ENCODE measurements at regions of chr3 and their contacts with region 1.

Region 1: DNA sequence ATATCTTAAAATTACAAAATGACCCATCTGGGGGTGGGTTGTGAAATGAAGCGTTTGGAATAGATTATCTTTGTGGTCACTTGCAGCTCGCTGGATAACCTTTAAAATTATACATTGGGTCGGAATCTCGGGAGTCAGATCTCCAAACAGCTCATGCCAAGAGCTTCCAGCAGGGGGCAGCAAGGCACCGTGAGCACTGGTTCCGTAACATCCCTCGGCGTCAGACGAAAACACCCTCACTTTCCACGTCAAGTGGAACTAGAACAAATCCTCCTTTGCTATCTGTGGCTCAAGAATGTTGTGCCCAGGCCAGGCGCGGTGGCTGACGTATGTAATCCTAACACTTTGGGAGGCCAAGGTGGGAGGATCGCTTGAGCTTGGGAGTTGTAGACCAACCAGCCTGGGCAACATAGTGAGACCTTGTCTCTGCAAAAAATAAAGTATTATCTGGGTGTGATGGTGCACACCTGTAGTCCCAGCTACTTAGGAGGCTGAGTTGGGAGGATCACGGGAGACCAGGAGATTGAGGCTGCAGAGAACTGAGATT is 31.1 kb downstream of the UMPS start:
- DNase-seq: peak; percentile 61 to 87 (median 81)
- ATAC-seq: peak; percentile 91
- H3K4me3 ChIP-seq: no peak overlapping the region
- H3K4me3 Mint-ChIP-seq: peak overlapping the region; percentile 69
- H3K27ac ChIP-seq: no peak overlapping the region
- H3K27ac Mint-ChIP-seq: no peak overlapping the region
- H3K4me1 ChIP-seq: no peaks in the 10 kb centered on the region
- H3K4me1 Mint-ChIP-seq: peaks cover 5% of the 10 kb centered on the region
- H3K27me3 ChIP-seq: no peaks in the 10 kb centered on the region
- H3K27me3 Mint-ChIP-seq: no peaks in the 10 kb centered on the region
- CTCF ChIP-seq: peak; percentile 86

Region 2: DNA sequence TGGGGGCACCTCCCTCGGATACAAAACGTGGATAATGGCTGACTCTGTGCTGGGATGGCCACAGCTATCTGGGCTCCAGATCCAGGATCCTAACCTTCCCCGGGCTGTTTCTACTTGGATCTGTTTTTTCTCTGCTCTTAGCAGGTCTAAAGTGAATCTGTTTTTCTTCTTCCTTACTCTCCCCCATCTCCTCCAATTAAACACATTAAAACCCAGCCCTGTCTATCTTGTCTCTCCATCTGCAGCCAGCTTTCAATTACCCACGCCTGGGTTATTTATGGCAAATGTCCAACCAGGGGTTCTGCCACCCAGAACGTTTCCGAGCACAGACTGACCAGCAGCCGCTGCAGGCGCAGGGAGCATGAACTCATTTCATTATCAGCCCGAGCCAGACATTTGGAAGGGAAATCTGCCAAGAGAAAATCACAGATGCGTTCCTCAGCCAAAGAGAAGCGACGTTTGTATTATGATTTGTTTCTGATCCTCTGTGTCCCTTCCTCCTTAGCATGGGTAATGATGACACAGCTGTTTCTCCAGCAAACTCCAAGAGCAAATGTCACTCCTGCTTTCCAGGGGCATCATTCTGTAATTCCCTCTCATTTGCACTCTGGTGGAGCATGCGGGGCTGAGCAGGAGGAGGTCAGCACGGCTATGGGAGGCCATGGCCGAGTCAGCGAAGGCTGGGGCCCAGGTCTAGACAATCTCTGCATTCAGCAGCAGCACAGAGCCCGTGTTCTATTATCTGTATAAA is 10.9 kb after region 1 on chr3:
- CTCF ChIA-PET with region 1: interaction called, 16 read pairs
- POLR2A ChIA-PET with region 1: interaction called, 3 read pairs
- intact Hi-C with region 1: no loop called
- DNase-seq: no peak
- ATAC-seq: no peak
- H3K4me3 ChIP-seq: no peak overlapping the region
- H3K4me3 Mint-ChIP-seq: no peak overlapping the region
- H3K27ac ChIP-seq: no peak overlapping the region
- H3K27ac Mint-ChIP-seq: no peak overlapping the region
- H3K4me1 ChIP-seq: no peaks in the 10 kb centered on the region
- H3K4me1 Mint-ChIP-seq: no peaks in the 10 kb centered on the region
- H3K27me3 ChIP-seq: peaks cover 0 to 4% of the 10 kb centered on the region in 2 experiments
- H3K27me3 Mint-ChIP-seq: peaks cover 16% of the 10 kb centered on the region
- CTCF ChIP-seq: no peak

Region 3: GRCh38 chr3:124895756-124896155 is 134.4 kb after region 1 on chr3:
- CTCF ChIA-PET with region 1: interaction called, 166 read pairs
- POLR2A ChIA-PET with region 1: interaction called, 8 read pairs
- intact Hi-C with region 1: no loop called
- DNase-seq: no peak
- ATAC-seq: no peak
- H3K4me3 ChIP-seq: no peak overlapping the region
- H3K4me3 Mint-ChIP-seq: no peak overlapping the region
- H3K27ac ChIP-seq: no peak overlapping the region
- H3K27ac Mint-ChIP-seq: no peak overlapping the region
- H3K4me1 ChIP-seq: no peaks in the 10 kb centered on the region
- H3K4me1 Mint-ChIP-seq: peaks cover 1% of the 10 kb centered on the region
- H3K27me3 ChIP-seq: no peaks in the 10 kb centered on the region
- H3K27me3 Mint-ChIP-seq: peaks cover 7% of the 10 kb centered on the region
- CTCF ChIP-seq: no peak

Region 4: DNA sequence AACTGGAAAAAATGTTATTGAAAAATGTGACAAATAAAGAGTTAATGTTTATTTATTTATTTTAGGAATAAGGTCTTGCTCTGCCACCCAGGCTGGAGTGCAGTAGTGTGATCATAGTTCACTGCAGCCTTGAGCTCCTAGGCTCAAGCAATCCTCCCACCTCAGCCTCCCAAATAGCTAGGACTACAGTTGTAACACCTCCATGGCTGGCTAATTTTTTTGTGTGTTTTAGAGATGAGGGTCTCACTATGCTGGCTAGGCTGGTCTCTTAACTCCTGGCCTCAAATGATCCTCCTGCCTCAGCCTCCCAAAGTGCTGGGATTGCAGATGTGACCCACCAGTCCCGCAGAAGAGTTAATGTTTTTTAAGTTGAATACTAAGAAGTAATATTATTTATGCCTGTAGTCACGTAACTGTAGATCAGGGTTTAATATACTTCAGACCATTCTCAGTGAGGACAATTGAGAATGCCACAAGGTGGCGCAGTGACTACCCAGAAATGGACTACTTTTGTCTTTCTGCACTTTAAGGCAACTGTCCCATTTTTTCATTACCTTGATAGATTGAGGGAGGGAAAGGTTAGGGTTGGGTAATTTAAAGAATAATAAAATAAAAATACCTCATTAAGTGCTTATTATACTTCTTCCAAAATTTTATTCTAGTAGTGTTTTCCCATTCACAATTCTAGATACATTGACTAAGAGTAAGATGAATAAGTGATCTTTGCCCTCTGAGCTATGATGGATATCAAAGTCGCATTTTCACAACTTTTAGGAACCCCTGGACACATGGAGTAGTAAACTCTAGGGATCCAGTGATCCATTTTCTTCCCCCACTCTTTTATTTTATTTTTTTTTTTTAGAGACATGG is 167.2 kb after region 1 on chr3:
- CTCF ChIA-PET with region 1: interaction called, 4 read pairs
- POLR2A ChIA-PET with region 1: no interaction called
- intact Hi-C with region 1: loop called in 1 of 2 experiments (anchors 1 kb)
- DNase-seq: peak; percentile 29 to 73 (median 59)
- ATAC-seq: peak; percentile 48
- H3K4me3 ChIP-seq: no peak overlapping the region
- H3K4me3 Mint-ChIP-seq: no peak overlapping the region
- H3K27ac ChIP-seq: no peak overlapping the region
- H3K27ac Mint-ChIP-seq: no peak overlapping the region
- H3K4me1 ChIP-seq: no peaks in the 10 kb centered on the region
- H3K4me1 Mint-ChIP-seq: no peaks in the 10 kb centered on the region
- H3K27me3 ChIP-seq: no peaks in the 10 kb centered on the region
- H3K27me3 Mint-ChIP-seq: peaks cover 8% of the 10 kb centered on the region
- CTCF ChIP-seq: peak; percentile 69

Region 5: DNA sequence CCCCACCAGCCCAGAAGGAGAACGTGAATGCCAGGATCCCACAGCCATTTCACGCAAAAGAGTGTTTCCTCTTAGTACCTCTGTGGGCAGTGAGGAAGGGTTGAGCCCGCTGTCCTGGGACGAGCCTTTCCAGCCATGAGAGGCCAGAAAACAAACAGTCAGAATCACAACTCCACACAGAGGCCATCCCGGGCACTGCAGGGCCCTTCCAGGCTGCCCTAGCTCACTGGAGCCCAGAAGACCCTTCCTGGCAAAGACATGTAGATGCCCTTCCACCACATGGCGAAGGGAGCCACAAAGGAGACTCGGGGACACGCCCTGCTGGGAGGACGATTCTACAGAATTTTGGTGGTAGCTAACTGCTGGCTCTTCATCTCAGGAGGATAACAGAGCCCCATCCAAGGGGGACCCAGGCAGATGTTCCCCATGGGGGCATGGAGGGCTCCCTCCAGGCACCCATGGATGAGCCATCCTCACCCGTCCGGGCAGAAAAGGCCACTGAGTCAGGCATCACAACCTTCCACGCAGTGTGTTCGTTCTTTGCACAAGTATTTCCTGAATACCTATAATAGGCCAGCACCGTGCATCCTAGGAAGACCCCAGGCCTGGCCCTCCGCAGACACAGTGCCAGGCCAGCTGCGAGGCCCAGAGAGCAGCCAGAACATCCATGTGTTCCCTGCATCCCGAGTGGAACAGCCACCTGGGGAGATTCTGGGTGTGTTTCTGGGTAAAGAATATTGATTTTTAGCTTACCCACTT is 404.0 kb after region 1 on chr3:
- CTCF ChIA-PET with region 1: no interaction called
- POLR2A ChIA-PET with region 1: no interaction called
- intact Hi-C with region 1: no loop called
- DNase-seq: no peak
- ATAC-seq: no peak
- H3K4me3 ChIP-seq: no peak overlapping the region
- H3K4me3 Mint-ChIP-seq: no peak overlapping the region
- H3K27ac ChIP-seq: no peak overlapping the region
- H3K27ac Mint-ChIP-seq: no peak overlapping the region
- H3K4me1 ChIP-seq: no peaks in the 10 kb centered on the region
- H3K4me1 Mint-ChIP-seq: peaks cover 3% of the 10 kb centered on the region
- H3K27me3 ChIP-seq: no peaks in the 10 kb centered on the region
- H3K27me3 Mint-ChIP-seq: peaks cover 2% of the 10 kb centered on the region
- CTCF ChIP-seq: no peak

Region 6: GRCh38 chr3:125282659-125283058 is 521.3 kb after region 1 on chr3:
- CTCF ChIA-PET with region 1: no interaction called
- POLR2A ChIA-PET with region 1: no interaction called
- intact Hi-C with region 1: no loop called
- DNase-seq: no peak
- ATAC-seq: no peak
- H3K4me3 ChIP-seq: no peak overlapping the region
- H3K4me3 Mint-ChIP-seq: no peak overlapping the region
- H3K27ac ChIP-seq: no peak overlapping the region
- H3K27ac Mint-ChIP-seq: no peak overlapping the region
- H3K4me1 ChIP-seq: no peaks in the 10 kb centered on the region
- H3K4me1 Mint-ChIP-seq: peaks cover 22% of the 10 kb centered on the region
- H3K27me3 ChIP-seq: no peaks in the 10 kb centered on the region
- H3K27me3 Mint-ChIP-seq: no peaks in the 10 kb centered on the region
- CTCF ChIP-seq: no peak

Region 7: DNA sequence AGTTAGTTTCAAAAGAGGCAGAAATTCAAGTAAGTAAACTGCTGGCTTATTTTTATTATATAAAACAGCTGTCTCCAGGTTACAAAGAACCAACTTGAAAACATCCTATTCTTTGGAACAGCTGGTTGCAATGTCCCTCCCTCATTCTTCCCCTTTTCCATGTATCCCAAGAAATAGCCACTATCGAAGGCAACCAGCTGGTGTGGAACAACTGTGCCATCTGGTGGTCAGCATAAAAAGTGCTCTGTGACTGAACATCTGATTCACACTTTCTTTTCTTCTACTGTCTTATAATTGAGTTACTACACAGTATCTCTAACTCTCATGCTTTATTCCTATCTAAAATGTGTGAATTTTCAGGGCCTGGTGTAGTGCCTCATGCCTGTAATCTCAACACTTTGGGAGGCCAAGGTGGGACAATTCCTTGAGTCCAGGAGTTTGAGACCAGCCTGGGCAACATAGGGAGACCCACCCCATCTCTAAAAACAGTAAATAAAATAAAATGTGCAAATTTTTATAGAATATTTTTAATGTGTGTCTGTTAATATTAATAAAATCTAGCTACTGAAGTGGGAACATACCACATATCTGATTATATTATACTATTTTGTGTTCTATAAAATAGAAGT is 824.4 kb after region 1 on chr3:
- CTCF ChIA-PET with region 1: interaction called, 7 read pairs
- POLR2A ChIA-PET with region 1: no interaction called
- intact Hi-C with region 1: loop called (anchors 1 to 2 kb)
- DNase-seq: peak in 6 of 9 experiments; percentile 24 to 68 (median 40)
- ATAC-seq: peak; percentile 74
- H3K4me3 ChIP-seq: no peak overlapping the region
- H3K4me3 Mint-ChIP-seq: no peak overlapping the region
- H3K27ac ChIP-seq: no peak overlapping the region
- H3K27ac Mint-ChIP-seq: no peak overlapping the region
- H3K4me1 ChIP-seq: peaks cover 5% of the 10 kb centered on the region
- H3K4me1 Mint-ChIP-seq: peaks cover 23% of the 10 kb centered on the region
- H3K27me3 ChIP-seq: no peaks in the 10 kb centered on the region
- H3K27me3 Mint-ChIP-seq: no peaks in the 10 kb centered on the region
- CTCF ChIP-seq: peak; percentile 87

Measured in CD8-positive, alpha-beta T cell (primary cell).